Astrocyte of the cerebellum (primary cell): ENCODE measurements at regions of chr6 and their contacts with region 1.

Region 1: DNA sequence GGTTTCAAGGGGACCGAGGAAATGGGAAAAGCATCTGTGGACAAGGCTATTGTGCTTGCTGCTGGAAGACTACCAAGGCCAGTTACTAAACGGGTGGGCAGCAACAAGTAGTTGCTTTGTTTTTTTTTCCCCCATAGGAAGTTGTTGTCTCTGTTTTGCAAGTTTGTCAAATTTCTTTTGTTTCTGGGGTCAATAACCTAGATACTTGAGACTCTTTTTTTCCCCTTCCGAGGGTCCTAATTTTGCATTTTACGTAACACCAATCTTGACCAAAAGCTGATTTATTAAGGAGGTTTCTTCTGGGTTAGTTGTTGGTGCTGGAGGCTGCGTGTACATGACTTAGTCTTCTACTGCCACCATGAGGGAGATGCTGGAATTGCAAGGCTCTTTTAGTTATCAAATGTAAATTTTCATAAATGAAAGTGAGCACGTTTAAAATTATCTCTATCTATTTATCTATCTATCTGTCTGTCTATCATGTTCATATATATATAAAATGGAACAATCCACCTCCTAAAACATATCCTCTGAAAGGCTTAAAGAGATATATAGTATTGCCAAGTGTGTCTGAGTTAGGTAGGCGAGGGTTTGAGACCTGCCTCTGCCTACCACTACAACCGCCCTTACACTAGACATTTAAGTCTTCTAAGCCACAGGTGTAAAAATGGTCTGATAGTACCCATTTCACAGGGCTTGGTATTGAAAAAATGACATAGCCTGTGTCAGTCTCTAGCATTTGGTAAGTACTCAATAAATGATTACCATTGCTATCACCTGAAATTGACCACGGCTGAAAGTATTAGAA is 60.2 kb downstream of the GCLC start:
- DNase-seq: peak; percentile 75
- H3K4me3 ChIP-seq: no peak overlapping the region
- CTCF ChIP-seq: peak; percentile 93

Region 2: GRCh38 chr6:53168511-53169267 is 316.0 kb before region 1 on chr6:
- in situ Hi-C with region 1: loop called (anchors 5 kb)
- DNase-seq: peak; percentile 51
- H3K4me3 ChIP-seq: no peak overlapping the region
- CTCF ChIP-seq: no peak

Region 3: DNA sequence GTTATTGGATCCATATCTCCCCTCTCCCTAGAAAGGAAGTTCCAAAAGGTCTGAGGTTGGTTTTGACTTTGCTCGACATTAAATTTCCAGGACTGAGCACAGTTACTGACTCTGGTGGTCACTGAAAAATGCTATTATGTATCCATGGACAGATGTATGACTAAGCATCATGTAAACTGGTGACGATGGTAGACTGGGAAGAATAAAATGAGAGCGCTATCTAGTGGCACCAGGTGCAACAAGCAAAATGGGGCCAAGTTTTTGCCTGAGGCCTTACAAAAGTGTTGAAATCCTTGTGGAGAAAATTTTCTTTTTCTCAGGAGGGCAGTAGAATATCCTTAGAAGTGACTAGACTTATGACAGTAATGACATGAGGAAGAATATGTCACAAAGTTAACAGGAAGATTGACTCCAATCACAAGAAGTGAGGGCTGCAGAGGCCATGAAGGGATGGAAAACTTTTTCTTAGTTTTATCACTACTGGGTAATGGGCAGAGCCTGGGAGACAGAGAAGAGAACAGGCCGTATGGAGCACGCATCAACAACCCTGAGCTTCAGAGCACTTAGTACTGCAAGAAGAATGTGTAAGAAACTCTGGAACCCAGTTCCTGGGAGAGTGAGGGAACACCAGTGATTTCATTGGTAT is 47.0 kb before region 1 on chr6:
- in situ Hi-C with region 1: no loop called
- DNase-seq: peak; percentile 74
- H3K4me3 ChIP-seq: no peak overlapping the region
- CTCF ChIP-seq: peak; percentile 81